Activated CD4-positive, alpha-beta T cell treated with anti-CD3 and anti-CD28 coated beads for 36 hours (primary cell): ENCODE measurements at regions of chr11 and their contacts with region 1.

Region 1: DNA sequence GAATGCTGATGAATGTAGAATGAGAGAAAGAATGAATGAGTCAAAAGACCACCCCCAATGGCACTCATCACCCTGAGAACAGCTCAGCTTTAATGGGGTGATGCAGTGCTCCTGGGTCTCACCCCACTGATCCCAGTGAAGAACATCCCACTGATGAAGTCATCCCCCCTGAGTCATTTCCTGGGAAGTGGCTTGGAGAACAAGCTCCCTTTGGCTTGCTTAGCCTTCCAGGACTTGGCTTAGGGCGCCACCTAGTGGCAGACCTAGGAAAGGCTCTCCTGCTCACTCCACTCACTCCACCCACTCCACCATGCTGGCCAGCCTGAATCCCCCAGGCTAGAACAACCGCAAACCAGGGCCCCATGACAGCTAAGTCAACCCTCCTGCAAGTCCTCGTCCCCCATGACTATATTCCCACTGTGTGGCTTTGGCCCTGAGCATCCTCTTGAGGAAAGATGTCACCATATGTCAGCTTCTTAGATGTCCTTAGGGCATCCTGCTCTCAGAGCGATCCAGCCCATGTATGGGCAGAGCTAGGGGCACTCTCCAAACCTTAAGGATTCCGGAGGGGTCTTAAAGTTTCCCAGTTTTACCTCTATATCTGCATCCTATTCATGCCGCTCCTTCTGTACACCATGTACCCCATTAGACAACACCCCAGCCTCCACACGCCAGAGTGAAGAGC is 17.8 kb upstream of the TMPRSS13 start:
- DNase-seq: peak; percentile 92
- ATAC-seq: peak; percentile 59
- H3K4me3 Mint-ChIP-seq: no peak overlapping the region
- H3K27ac Mint-ChIP-seq: peak overlapping the region; percentile 68
- H3K4me1 Mint-ChIP-seq: peaks cover 79% of the 10 kb centered on the region
- H3K27me3 Mint-ChIP-seq: no peaks in the 10 kb centered on the region

Region 2: DNA sequence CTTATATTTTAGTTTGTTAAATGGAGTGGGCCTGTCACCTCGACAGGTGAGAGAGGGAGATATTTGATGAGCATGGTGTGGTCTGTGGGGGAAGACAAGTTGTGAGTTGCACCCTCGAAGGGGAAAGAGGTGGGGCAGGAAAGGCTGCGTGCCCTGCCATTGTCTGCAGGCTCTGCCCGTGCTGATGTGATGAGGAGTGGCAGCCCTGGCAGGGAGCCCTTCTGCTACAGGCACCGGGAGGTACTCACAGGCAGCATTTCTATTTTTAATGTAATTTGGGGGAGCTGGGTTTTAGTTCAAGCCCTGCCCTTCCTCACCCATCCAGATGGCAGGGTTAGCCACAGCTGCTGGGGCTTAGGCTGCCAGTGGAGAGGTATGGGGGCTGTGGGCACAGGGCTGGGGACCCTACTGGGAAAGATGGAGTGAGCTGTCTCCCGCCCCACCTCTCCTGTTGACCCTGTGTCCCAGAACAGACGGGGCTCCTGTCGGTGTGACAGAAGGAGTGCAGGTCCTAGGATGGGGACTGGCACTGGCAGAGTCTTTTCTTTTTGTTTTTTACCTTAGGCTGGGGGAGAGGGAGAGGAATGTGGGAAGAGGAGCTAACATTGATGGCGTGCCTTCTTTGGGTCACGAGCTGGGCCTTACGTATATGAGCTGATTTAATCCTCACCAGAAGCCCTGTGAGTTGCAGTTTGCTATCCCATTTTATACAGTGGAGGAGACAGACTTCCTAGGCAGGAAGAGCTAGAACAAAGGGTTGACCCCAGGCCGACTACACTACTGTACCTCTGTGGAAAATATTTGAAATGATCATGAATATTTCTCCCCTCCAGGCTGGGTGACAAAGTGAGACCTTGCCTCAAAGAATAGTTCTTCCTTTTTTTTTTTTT is 567.8 kb before region 1 on chr11:
- CTCF ChIA-PET with region 1: no interaction called
- POLR2A ChIA-PET with region 1: no interaction called
- intact Hi-C with region 1: no loop called
- DNase-seq: no peak
- ATAC-seq: no peak
- H3K4me3 Mint-ChIP-seq: no peak overlapping the region
- H3K27ac Mint-ChIP-seq: no peak overlapping the region
- H3K4me1 Mint-ChIP-seq: no peaks in the 10 kb centered on the region
- H3K27me3 Mint-ChIP-seq: no peaks in the 10 kb centered on the region

Region 3: DNA sequence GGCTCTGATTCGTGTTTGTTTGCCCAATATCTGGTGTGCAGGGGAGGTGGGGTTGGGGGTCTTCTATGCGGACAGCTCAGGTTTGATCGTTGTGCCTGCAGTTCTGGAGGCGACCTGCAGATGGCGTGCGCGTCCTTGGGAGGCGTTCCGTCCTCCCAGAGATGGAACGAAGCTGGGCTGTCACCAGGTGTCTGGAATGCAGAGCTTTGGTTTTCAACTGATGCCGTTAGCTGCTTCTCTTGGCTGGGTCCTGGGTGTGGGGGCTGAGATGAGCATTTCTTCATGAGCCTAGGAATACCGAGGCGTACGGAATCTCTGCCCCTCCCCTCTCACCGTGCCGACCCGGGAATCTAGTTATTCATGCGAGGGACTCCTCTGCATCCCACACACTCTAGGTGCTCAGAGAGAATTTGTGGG is 520.7 kb before region 1 on chr11:
- CTCF ChIA-PET with region 1: interaction called, 4 read pairs
- POLR2A ChIA-PET with region 1: no interaction called
- intact Hi-C with region 1: loop called in 1 of 2 experiments (anchors 5 kb)
- DNase-seq: peak; percentile 86
- ATAC-seq: peak; percentile 78
- H3K4me3 Mint-ChIP-seq: no peak overlapping the region
- H3K27ac Mint-ChIP-seq: no peak overlapping the region
- H3K4me1 Mint-ChIP-seq: peaks cover 7% of the 10 kb centered on the region
- H3K27me3 Mint-ChIP-seq: no peaks in the 10 kb centered on the region

Region 4: GRCh38 chr11:117828611-117829368 is 118.2 kb before region 1 on chr11:
- CTCF ChIA-PET with region 1: interaction called, 21 read pairs
- POLR2A ChIA-PET with region 1: interaction called, 3 read pairs
- intact Hi-C with region 1: no loop called
- DNase-seq: peak; percentile 91
- ATAC-seq: peak; percentile 96
- H3K4me3 Mint-ChIP-seq: no peak overlapping the region
- H3K27ac Mint-ChIP-seq: peak overlapping the region; percentile 78
- H3K4me1 Mint-ChIP-seq: peaks cover 41% of the 10 kb centered on the region
- H3K27me3 Mint-ChIP-seq: no peaks in the 10 kb centered on the region

Region 5: GRCh38 chr11:117919781-117920221 is 27.2 kb before region 1 on chr11:
- CTCF ChIA-PET with region 1: interaction called, 22 read pairs
- POLR2A ChIA-PET with region 1: no interaction called
- intact Hi-C with region 1: no loop called
- DNase-seq: peak; percentile 49
- ATAC-seq: peak; percentile 100
- H3K4me3 Mint-ChIP-seq: no peak overlapping the region
- H3K27ac Mint-ChIP-seq: peak overlapping the region; percentile 33
- H3K4me1 Mint-ChIP-seq: peaks cover 11% of the 10 kb centered on the region
- H3K27me3 Mint-ChIP-seq: no peaks in the 10 kb centered on the region

Region 6: DNA sequence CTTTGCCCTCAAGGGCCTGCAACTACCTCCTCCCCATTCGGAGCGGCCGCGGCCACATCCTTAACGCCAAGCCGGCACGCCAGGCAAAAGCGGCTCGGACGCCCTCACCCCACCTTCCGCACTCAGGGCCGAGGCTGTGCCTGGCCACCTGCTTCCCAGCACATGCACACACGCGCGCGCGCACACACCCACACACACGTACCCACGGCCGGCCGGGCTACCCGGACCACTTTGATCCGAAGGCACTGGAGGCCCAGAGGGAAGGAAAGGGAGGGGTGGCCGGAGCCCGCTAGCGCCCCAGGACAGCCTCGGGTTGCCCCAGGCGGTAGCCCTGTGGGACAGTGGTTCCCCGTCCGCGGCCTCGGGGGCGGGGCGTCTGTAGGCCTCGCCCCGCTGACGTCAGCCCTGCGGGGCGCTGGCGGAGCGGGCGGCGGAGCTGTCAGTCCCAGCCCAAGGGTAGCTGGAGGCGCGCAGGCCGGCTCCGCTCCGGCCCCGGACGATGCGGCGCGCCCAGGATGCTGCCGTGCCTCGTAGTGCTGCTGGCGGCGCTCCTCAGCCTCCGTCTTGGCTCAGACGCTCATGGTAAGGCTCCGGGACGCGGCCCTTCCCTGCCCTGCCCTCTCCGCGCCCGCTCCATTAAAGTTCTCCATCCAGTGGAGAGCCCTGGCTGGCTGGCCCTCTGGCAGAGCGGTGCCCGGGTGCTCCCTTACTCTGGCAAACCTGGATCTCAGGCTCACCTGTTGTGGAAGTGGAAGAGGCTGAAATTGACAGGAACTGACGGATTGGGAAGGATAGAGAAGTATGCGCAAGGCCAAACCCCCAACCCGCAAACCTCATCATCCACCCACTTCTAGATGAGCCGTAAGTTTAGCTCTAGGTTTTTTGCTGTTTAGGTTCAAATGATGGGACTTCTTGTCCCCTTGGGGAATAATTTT is 39.2 kb after region 1 on chr11 and contains the start of gene IL10RA:
- CTCF ChIA-PET with region 1: interaction called, 43 read pairs
- POLR2A ChIA-PET with region 1: interaction called, 32 read pairs
- intact Hi-C with region 1: loop called (anchors 1 kb)
- DNase-seq: peak; percentile 90
- ATAC-seq: peak; percentile 80
- H3K4me3 Mint-ChIP-seq: peak within 1 kb of the TSS; percentile 96
- H3K27ac Mint-ChIP-seq: peak within 1 kb of the TSS; percentile 96
- H3K4me1 Mint-ChIP-seq: peaks cover 76% of the 10 kb centered on the region
- H3K27me3 Mint-ChIP-seq: no peaks in the 10 kb centered on the region
- total RNA-seq, gene IL10RA: 57.1 to 79.4 TPM

Region 7: GRCh38 chr11:118051611-118052461 is 104.9 kb after region 1 on chr11:
- CTCF ChIA-PET with region 1: interaction called, 211 read pairs
- POLR2A ChIA-PET with region 1: interaction called, 3 read pairs
- intact Hi-C with region 1: loop called (anchors 1 kb)
- DNase-seq: peak; percentile 77
- ATAC-seq: peak; percentile 82
- H3K4me3 Mint-ChIP-seq: peak overlapping the region; percentile 46
- H3K27ac Mint-ChIP-seq: peak overlapping the region; percentile 89
- H3K4me1 Mint-ChIP-seq: peaks cover 60% of the 10 kb centered on the region
- H3K27me3 Mint-ChIP-seq: peaks cover under 1% of the 10 kb centered on the region